ENCODE measurements at regions of chr15 and their contacts with region 1.

Region 1: GRCh38 chr15:77419836-77420609 is at the start of gene PEAK1:
- DNase-seq: peak; percentile 98
- H3K4me3 ChIP-seq: peak within 1 kb of the TSS; percentile 79 to 99 (median 95)
- H3K27ac ChIP-seq: peak within 1 kb of the TSS; percentile 95
- H3K4me1 ChIP-seq: peaks cover 43% of the 10 kb centered on the region
- H3K27me3 ChIP-seq: no peaks in the 10 kb centered on the region
- CTCF ChIP-seq: no peak
- POLR2A ChIP-seq: peak; percentile 84
- total RNA-seq, gene PEAK1: 79.2 and 91.9 TPM in 2 replicates

Region 2: DNA sequence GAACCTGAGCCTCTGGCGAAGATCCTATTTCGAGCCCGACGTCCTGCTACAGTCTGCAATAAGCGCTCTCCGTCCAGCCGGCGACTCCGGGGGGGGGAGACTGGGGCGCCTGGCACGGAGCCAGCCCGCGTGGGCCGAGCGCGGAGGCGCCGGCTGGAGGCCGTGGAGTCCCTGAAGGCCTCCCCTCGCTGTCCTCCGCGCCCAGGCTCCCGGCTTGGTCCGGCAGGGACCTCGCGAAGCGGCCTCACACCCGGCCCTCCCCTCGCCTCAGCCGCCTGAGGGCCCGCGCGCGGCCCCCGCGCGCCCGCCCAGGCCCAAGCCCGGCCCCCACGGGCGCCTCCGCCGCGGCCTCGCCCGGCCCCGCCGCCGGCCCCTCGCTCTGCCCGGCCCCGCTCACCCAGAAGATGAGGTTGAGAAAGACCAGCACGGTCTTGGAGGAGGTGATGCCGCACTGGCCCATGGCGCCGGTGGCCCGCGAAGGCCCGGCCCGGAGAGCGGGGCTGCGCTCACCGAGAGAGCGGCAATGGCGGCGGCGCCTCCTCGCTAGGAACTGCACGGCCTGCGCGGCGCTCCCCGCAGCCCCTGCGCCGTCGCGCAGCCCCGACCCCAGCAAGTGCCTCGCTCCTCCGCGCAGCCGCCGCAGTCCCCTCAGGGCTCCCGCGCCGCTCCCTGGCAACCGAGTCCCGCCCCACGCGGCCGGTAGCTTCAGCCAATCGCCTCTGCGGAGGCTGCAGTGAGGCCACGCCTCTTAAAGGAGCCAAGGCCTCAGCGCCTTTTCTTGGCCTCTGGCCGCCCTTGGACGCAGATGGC is 349.3 kb before region 1 on chr15 and contains the start of gene TSPAN3:
- CTCF ChIA-PET with region 1: no interaction called
- POLR2A ChIA-PET with region 1: no interaction called
- dilution Hi-C with region 1: no loop called
- intact Hi-C with region 1: loop called (anchors 1 kb)
- DNase-seq: peak; percentile 96
- H3K4me3 ChIP-seq: peak within 1 kb of the TSS; percentile 53 to 98 (median 90)
- H3K27ac ChIP-seq: peak within 1 kb of the TSS; percentile 81
- H3K4me1 ChIP-seq: peaks cover 35% of the 10 kb centered on the region
- H3K27me3 ChIP-seq: peaks cover 4% of the 10 kb centered on the region in 2 experiments
- CTCF ChIP-seq: no peak
- POLR2A ChIP-seq: peak; percentile 70
- total RNA-seq, gene TSPAN3: 202 and 215 TPM in 2 replicates

Region 3: DNA sequence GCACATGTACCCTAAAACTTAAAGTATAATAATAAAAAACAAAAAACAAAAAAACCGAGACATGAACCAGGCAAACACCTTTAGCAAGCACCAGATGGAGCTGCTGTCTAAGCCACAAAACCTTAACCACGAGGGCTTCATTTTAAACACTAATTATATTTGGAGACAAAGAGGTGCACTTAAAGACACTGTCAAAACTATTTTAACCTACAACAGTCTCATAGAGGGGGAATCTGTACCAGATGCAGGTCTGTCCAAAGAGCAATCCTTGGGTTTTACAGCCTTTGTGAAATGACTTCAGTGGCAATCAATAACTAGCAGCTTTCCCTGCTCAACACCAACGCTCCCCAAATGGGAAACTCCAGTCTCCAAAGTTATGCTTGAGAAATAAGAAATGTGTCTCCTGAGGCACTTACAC is 233.4 kb before region 1 on chr15:
- CTCF ChIA-PET with region 1: interaction called, 6 read pairs
- POLR2A ChIA-PET with region 1: no interaction called
- dilution Hi-C with region 1: no loop called
- intact Hi-C with region 1: loop called (anchors 1 kb)
- DNase-seq: peak; percentile 66
- H3K4me3 ChIP-seq: no peak overlapping the region
- H3K27ac ChIP-seq: peak overlapping the region; percentile 92
- H3K4me1 ChIP-seq: peaks cover 33% of the 10 kb centered on the region
- H3K27me3 ChIP-seq: no peaks in the 10 kb centered on the region
- CTCF ChIP-seq: peak; percentile 30 to 56
- POLR2A ChIP-seq: no peak

Region 4: DNA sequence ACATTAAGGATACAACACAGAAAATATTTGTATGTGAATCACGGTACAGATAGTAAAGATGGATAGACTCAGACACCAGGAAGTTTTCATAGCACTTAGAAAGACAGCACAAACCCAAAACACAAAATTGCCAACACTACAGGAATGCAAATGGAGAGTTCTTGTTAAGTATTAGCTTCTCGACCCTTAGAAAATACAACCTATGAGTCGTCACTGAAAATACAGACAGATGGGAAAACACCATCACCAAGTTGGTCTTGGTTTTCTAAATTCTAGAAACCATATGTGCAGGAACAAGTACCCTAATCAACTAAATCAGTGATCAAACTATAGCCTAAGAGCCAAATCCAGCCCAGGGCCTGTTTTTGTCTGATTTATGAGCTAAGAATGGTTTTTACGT is 50.9 kb before region 1 on chr15:
- CTCF ChIA-PET with region 1: no interaction called
- POLR2A ChIA-PET with region 1: no interaction called
- dilution Hi-C with region 1: no loop called
- intact Hi-C with region 1: loop called (anchors 5 kb)
- DNase-seq: no peak
- H3K4me3 ChIP-seq: no peak overlapping the region
- H3K27ac ChIP-seq: no peak overlapping the region
- H3K4me1 ChIP-seq: no peaks in the 10 kb centered on the region
- H3K27me3 ChIP-seq: no peaks in the 10 kb centered on the region
- CTCF ChIP-seq: no peak
- POLR2A ChIP-seq: no peak

Region 5: GRCh38 chr15:77387365-77388105 is 32.5 kb before region 1 on chr15:
- CTCF ChIA-PET with region 1: no interaction called
- POLR2A ChIA-PET with region 1: no interaction called
- dilution Hi-C with region 1: no loop called
- intact Hi-C with region 1: no loop called
- DNase-seq: no peak
- H3K4me3 ChIP-seq: no peak overlapping the region
- H3K27ac ChIP-seq: no peak overlapping the region
- H3K4me1 ChIP-seq: peaks cover 2% of the 10 kb centered on the region
- H3K27me3 ChIP-seq: no peaks in the 10 kb centered on the region
- CTCF ChIP-seq: no peak
- POLR2A ChIP-seq: no peak

Region 6: DNA sequence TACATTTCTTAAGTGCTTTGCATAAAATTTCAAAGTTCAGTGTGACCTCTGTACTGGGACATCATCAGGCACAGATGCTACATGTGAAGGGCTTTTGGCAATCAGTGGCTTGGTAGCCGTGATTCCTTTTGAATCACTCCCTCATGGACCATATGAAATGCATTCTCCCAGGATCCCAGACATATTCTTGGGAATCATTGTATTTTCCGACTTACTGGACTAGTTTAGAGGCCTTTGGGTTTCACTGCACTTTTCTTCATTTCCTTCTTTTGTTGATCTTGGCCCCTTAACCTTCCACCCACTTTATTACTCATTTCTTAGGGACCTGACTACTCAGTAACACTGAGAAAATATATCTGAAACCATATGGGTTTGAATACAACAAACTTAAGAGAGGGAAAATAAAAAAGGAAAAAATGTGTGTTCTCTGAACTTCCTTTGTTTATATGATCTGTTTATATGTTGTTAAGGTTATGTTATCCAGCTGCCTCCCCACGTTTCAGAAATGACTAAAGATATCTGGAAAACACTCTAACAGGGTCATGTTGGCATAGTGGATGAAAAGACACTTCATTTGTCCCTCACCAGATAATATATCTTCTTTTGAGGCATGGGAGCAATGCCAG is 35.8 kb after region 1 on chr15:
- CTCF ChIA-PET with region 1: interaction called, 5 read pairs
- POLR2A ChIA-PET with region 1: no interaction called
- dilution Hi-C with region 1: no loop called
- intact Hi-C with region 1: loop called (anchors 1 kb)
- DNase-seq: peak; percentile 95
- H3K4me3 ChIP-seq: peak overlapping the region in 1 of 3 experiments; percentile 23
- H3K27ac ChIP-seq: peak overlapping the region; percentile 96
- H3K4me1 ChIP-seq: peaks cover 54% of the 10 kb centered on the region
- H3K27me3 ChIP-seq: no peaks in the 10 kb centered on the region
- CTCF ChIP-seq: no peak
- POLR2A ChIP-seq: no peak

Region 7: GRCh38 chr15:77482570-77482969 is 62.5 kb after region 1 on chr15:
- CTCF ChIA-PET with region 1: interaction called, 11 read pairs
- POLR2A ChIA-PET with region 1: no interaction called
- dilution Hi-C with region 1: no loop called
- intact Hi-C with region 1: loop called (anchors 1 kb)
- DNase-seq: peak; percentile 87
- H3K4me3 ChIP-seq: no peak overlapping the region
- H3K27ac ChIP-seq: peak overlapping the region; percentile 76
- H3K4me1 ChIP-seq: peaks cover 67% of the 10 kb centered on the region
- H3K27me3 ChIP-seq: no peaks in the 10 kb centered on the region
- CTCF ChIP-seq: no peak
- POLR2A ChIP-seq: no peak

Region 8: DNA sequence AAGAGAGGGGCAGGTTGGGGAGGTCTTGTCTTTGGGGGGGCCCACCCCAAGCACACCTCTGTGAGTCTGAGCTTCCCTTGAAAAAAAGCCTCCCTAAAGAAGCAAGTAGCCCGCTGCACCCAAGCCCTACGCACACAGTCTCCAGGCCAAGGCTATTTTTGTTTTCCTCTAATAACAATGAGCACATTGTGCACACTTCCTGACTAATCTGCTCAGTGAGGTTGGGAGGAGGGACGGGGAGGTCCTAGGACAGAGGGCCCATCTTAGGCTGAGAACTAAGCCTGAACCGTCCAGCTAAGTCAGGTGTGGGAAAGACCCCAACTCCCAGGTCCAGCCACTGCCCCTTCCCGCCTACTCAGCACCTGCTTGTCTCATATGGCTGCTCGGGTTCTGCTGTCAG is 87.9 kb after region 1 on chr15:
- CTCF ChIA-PET with region 1: interaction called, 16 read pairs
- POLR2A ChIA-PET with region 1: no interaction called
- dilution Hi-C with region 1: no loop called
- intact Hi-C with region 1: loop called (anchors 1 kb)
- DNase-seq: peak; percentile 82
- H3K4me3 ChIP-seq: peak overlapping the region in 1 of 3 experiments; percentile 20
- H3K27ac ChIP-seq: peak overlapping the region; percentile 95
- H3K4me1 ChIP-seq: peaks cover 39% of the 10 kb centered on the region
- H3K27me3 ChIP-seq: no peaks in the 10 kb centered on the region
- CTCF ChIP-seq: no peak
- POLR2A ChIP-seq: no peak

Measured in endothelial cell of umbilical vein (primary cell).